Activated naive CD4-positive, alpha-beta T cell treated with anti-CD3 and anti-CD28 coated beads for 36 hours (primary cell): ENCODE measurements at regions of chr10 and their contacts with region 1.

Region 1: GRCh38 chr10:63935705-63936104 is 414.5 kb downstream of the REEP3 start:
- DNase-seq: no peak
- H3K4me3 Mint-ChIP-seq: no peak overlapping the region
- H3K27ac Mint-ChIP-seq: no peak overlapping the region
- H3K4me1 Mint-ChIP-seq: no peaks in the 10 kb centered on the region
- H3K27me3 Mint-ChIP-seq: no peaks in the 10 kb centered on the region

Region 2: DNA sequence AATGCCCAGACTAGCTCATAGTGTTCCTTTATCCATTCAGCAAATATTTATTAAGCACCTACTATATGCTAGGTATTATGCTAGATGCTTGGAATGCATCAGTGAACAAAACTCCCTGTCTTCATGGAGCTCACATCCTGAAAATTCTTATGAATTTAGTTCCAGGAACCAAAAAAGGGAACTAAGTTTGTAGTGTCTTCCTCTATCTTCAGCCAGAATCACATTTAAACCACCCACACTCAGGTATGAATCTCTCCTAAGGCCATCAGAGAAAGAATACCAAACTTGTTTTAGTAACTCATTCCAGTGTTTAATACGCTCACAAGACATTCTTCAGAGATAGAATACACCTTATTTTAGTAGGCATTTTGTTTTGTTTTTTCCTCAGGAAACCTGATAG is 1109.4 kb before region 1 on chr10:
- CTCF ChIA-PET with region 1: no interaction called
- intact Hi-C with region 1: no loop called
- DNase-seq: no peak
- H3K4me3 Mint-ChIP-seq: no peak overlapping the region
- H3K27ac Mint-ChIP-seq: no peak overlapping the region
- H3K4me1 Mint-ChIP-seq: no peaks in the 10 kb centered on the region
- H3K27me3 Mint-ChIP-seq: peaks cover 4% of the 10 kb centered on the region

Region 3: GRCh38 chr10:63504125-63504880 is 431.4 kb before region 1 on chr10:
- CTCF ChIA-PET with region 1: no interaction called
- intact Hi-C with region 1: no loop called
- DNase-seq: no peak
- H3K4me3 Mint-ChIP-seq: no peak overlapping the region
- H3K27ac Mint-ChIP-seq: no peak overlapping the region
- H3K4me1 Mint-ChIP-seq: peaks cover 8% of the 10 kb centered on the region
- H3K27me3 Mint-ChIP-seq: no peaks in the 10 kb centered on the region

Region 4: GRCh38 chr10:63878428-63878827 is 57.3 kb before region 1 on chr10:
- CTCF ChIA-PET with region 1: no interaction called
- intact Hi-C with region 1: loop called (anchors 2 kb)
- DNase-seq: no peak
- H3K4me3 Mint-ChIP-seq: no peak overlapping the region
- H3K27ac Mint-ChIP-seq: no peak overlapping the region
- H3K4me1 Mint-ChIP-seq: no peaks in the 10 kb centered on the region
- H3K27me3 Mint-ChIP-seq: peaks cover 7% of the 10 kb centered on the region

Region 5: DNA sequence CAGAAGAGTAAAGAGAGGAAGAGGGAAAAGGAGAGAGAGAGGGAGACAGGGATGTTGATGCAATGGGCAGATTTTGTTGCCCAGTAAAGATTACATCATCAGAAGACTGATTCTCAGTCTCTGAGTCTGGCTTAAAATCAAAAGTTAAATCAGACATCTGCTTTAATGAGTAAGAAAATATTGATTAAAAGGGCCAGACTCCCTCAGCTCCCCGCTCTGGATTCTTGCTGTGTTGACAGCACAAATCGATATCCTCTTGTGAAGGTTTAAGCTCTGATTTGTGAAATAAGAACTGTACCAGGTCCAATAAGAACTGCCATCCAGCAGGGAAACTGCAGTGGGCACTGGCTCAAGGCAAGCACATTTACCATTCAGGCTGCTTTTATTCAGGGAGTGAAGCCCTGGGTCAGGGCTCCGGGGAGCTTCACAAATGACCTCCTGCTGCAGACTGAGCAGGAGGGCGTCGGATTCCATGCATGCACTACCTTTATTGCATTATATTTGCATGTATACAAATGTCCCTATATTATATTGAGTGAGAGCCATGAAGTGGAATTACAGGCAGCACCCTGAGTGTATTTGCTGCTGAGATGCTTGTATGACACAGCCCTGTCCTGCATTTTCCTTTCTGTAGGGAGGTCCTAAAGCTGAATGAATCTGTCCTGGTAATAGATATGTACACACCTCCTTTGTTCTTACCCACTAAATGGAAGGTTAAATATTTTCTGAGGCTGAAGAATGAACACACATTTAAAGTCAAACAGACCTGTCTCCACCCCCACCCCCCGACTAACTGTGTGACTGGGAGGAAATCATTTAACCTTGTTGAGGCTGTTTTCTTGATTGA is 13.0 kb before region 1 on chr10:
- CTCF ChIA-PET with region 1: no interaction called
- intact Hi-C with region 1: no loop called
- DNase-seq: no peak
- H3K4me3 Mint-ChIP-seq: no peak overlapping the region
- H3K27ac Mint-ChIP-seq: no peak overlapping the region
- H3K4me1 Mint-ChIP-seq: no peaks in the 10 kb centered on the region
- H3K27me3 Mint-ChIP-seq: peaks cover 12% of the 10 kb centered on the region